ENCODE measurements at regions of chr1 and their contacts with region 1.

Region 1: DNA sequence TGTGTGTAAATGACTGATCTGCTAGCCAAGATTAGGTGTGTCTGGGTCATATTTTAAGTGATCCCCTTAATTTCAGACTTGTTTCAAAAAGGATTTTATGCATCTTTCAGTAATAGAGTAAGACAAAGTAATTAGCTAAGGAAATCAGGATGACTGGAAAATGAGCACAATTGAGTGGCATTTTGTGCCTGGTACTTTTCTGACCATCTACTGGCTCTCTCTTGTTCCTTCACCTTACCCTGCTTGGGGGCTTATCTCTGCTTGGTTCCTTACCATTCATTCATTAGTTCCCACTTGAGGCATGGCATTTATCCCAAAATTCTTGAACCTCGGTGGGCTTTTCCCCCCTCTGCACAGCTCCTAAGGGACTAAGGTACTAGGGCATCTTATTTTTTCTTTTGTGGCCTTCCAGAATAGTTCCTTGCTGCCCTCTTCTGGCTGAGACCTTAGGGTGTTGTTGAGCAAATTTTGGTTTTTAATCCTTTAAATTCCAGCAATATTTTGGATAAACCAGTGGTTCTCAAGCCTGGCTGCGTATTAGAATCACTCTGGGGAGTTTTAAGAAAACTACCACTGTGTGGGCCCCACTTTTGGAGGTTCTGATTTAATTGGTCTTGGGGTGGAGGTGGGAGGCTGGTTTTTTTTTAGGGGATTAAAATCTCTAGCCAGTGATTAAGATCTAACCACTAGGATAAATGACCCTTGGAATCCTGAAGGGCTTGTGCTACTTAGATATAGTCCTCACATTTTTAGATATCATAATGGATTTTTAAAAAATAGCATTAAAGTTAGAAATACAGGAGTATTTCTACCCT is 50.8 kb downstream of the HS2ST1 start:
- DNase-seq: no peak
- H3K4me3 ChIP-seq: no peak overlapping the region
- H3K27ac ChIP-seq: no peak overlapping the region
- H3K4me1 ChIP-seq: no peaks in the 10 kb centered on the region
- H3K27me3 ChIP-seq: no peaks in the 10 kb centered on the region
- CTCF ChIP-seq: peak in 2 of 3 experiments; percentile 60 to 68; a peak in 3 of 4 replicates
- EP300 ChIP-seq: no peak
- POLR2A ChIP-seq: no peak
- RAD21 ChIP-seq: peak; percentile 85 to 89

Region 2: GRCh38 chr1:85297855-85298629 is 1667.2 kb before region 1 on chr1:
- CTCF ChIA-PET with region 1: no interaction called
- POLR2A ChIA-PET with region 1: no interaction called
- DNase-seq: no peak
- H3K4me3 ChIP-seq: no peak overlapping the region
- H3K27ac ChIP-seq: no peak overlapping the region
- H3K4me1 ChIP-seq: peaks cover 0 to 2% (median 0%) of the 10 kb centered on the region in 4 experiments; a peak in 1 of 7 replicates
- H3K27me3 ChIP-seq: no peaks in the 10 kb centered on the region
- CTCF ChIP-seq: no peak
- EP300 ChIP-seq: no peak
- POLR2A ChIP-seq: no peak
- RAD21 ChIP-seq: no peak

Region 3: GRCh38 chr1:86782482-86782881 is 182.7 kb before region 1 on chr1:
- CTCF ChIA-PET with region 1: interaction called, 16 read pairs
- POLR2A ChIA-PET with region 1: no interaction called
- DNase-seq: no peak
- H3K4me3 ChIP-seq: no peak overlapping the region
- H3K27ac ChIP-seq: no peak overlapping the region
- H3K4me1 ChIP-seq: no peaks in the 10 kb centered on the region
- H3K27me3 ChIP-seq: no peaks in the 10 kb centered on the region
- CTCF ChIP-seq: no peak
- EP300 ChIP-seq: no peak
- POLR2A ChIP-seq: no peak
- RAD21 ChIP-seq: no peak

Region 4: DNA sequence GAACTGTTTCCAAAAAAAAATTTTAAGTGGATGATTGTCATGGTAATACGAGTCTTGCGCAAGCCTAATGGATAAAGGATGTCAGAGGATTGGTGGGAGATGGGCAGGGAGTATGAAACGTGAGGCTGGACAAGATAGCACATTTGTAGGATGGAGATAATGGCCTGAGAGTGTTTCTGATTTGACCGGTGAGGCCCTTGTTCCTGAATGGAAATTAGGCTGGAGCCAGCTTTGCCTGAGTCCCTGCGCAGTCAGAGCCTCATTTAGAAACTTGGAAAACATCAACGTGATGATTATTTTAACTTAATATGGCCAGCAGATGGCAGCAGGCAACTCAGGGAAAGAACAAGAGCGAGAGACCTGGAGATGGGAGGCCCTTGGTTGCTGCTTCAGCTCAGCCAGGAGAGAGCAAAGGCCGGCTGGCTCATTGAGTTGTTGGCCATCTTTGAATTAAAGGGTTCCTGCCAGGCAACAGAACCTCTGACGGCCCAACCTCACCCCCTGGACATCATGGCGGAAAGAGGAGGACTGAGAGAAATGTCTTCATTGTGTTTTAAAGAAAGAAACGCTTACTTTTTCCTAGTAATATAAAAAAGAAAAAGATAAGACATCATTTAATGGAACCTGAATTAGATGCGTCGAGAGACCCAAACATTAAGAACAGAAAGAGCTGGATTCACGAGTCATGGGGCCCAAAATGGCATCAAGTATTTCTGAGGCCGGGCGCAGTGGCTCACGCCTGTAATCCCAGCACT is 131.6 kb before region 1 on chr1:
- CTCF ChIA-PET with region 1: interaction called, 17 read pairs
- POLR2A ChIA-PET with region 1: no interaction called
- DNase-seq: peak; percentile 69 to 70
- H3K4me3 ChIP-seq: no peak overlapping the region
- H3K27ac ChIP-seq: no peak overlapping the region
- H3K4me1 ChIP-seq: no peaks in the 10 kb centered on the region; a peak in 1 of 7 replicates
- H3K27me3 ChIP-seq: no peaks in the 10 kb centered on the region
- CTCF ChIP-seq: peak; percentile 30 to 82 (median 75)
- EP300 ChIP-seq: no peak
- POLR2A ChIP-seq: no peak
- RAD21 ChIP-seq: peak; percentile 86 to 94

Region 5: DNA sequence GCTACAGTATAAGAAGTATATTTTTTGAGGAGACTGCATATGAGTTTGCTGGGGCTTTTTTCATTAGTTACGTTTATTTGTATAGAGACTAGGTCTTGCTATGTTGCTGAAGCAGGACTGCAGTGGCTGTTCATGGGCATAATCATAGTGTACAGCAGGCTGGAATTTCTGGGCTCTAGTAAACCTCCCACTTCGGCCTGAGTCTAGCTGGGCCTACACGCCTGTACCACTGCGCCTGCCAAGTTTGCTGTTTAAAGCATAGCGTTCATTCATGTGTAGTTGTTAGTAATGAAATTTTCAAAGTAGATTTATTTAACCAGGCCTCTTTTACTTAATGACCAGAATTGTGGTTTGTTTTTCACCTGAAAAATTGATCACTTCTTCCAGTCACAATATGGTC is 17.0 kb before region 1 on chr1:
- CTCF ChIA-PET with region 1: interaction called, 10 read pairs
- POLR2A ChIA-PET with region 1: no interaction called
- DNase-seq: no peak
- H3K4me3 ChIP-seq: no peak overlapping the region
- H3K27ac ChIP-seq: no peak overlapping the region
- H3K4me1 ChIP-seq: peaks cover 0 to 10% (median 4%) of the 10 kb centered on the region in 4 experiments; a peak in 4 of 7 replicates
- H3K27me3 ChIP-seq: no peaks in the 10 kb centered on the region
- CTCF ChIP-seq: no peak
- EP300 ChIP-seq: no peak
- POLR2A ChIP-seq: no peak
- RAD21 ChIP-seq: no peak

Region 6: DNA sequence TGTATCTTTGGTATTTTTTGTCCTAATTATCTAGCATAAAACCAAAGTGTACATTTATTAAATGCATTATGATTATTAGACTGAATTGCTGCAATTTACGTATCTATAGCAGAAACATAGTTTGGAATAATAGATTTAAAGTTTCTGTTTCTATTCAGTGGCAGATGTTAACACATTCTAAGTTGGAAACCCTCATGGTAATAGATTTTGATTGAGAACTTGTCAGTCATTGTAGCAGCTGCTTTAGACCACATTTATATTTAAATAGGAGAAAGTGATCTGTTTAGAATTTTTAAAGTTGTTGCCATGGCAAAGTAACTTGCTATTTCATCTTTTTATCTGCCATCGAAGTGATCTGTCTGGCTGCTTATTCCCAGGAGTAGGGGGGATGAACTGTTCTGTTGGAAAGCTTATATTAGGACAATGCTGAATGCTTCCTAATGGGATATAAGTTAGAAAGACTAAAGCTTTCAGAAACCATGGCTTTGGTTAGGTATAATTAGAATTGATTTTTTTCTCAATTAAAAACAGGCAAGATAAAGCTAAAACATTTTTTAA is 10.9 kb after region 1 on chr1:
- CTCF ChIA-PET with region 1: interaction called, 10 read pairs
- POLR2A ChIA-PET with region 1: interaction called, 4 read pairs
- DNase-seq: no peak
- H3K4me3 ChIP-seq: no peak overlapping the region
- H3K27ac ChIP-seq: no peak overlapping the region
- H3K4me1 ChIP-seq: peaks cover 0 to 3% (median 0%) of the 10 kb centered on the region in 4 experiments; a peak in 1 of 7 replicates
- H3K27me3 ChIP-seq: no peaks in the 10 kb centered on the region
- CTCF ChIP-seq: no peak
- EP300 ChIP-seq: no peak
- POLR2A ChIP-seq: no peak
- RAD21 ChIP-seq: no peak

Measured in H1 (cell line).